ENCODE measurements at regions of chr7 and their contacts with region 1.

Region 1: DNA sequence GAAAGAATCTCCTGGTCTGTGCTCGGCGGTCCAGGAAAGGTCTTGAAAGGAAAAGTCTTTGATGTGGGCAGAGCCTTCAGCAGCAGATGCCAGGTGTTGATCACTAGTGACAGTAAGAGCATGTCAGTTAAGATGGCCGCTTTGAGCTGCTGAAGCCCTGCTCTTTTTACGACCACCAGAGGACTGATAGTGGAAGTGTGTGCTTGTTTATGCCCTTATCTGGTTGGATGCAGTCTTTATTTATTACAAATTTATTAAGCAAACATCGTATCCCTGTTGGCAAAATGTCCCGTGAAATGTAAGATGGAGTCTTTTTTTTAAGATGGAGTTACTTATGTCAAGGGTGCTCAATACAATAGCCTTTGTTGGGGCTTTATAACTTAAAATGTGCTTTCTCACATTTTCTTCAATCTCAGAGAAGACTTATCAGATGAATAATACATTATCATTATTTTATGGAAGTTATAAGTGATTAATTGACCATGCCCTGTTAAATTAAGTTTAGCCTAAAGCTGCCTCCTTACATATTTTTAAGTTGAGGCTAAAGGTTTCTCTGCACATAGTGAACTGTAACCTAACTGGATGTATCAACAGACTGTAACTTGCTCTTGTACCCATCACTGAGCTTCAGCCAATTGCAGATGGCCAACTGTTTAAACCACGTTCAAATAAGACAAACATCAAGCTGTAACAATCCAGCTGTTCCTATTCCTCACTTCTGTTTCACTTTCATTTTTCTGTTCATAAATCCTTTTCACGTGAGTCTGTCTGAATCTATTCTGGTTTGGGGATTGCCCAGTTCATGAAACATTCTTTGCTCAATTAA is 97.4 kb upstream of the PIK3CG start:
- DNase-seq: peak; percentile 18
- H3K4me3 Mint-ChIP-seq: peak overlapping the region; percentile 42
- H3K27ac Mint-ChIP-seq: peak overlapping the region; percentile 65
- H3K4me1 Mint-ChIP-seq: peaks cover 49% of the 10 kb centered on the region
- H3K27me3 Mint-ChIP-seq: no peaks in the 10 kb centered on the region

Region 2: DNA sequence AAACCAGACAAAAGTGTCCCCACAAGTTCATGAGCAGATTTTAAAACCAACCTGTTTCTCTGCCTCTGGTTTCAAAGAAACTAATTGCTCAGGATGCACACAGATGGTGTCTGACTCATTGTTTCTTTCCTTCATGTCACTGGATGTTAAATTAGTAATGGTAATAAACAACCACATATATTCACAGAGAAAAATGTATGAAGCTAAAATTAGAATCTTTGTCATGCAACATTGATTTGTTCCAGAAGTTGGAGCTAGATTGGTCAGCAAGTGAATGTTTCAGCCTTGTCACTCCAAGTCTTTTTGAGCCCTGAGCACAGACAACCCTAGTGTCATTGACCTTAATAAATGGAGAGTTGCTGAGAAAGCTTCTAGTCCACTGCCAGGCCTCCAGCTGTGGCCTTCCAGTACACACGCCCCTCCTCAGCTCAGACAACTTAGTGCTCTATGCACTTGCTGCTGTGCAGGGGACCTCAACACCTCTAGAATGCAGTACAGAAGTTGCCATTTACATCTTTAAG is 282.6 kb before region 1 on chr7:
- CTCF ChIA-PET with region 1: no interaction called
- POLR2A ChIA-PET with region 1: no interaction called
- intact Hi-C with region 1: loop called (anchors 2 kb)
- DNase-seq: peak; percentile 22
- H3K4me3 Mint-ChIP-seq: no peak overlapping the region
- H3K27ac Mint-ChIP-seq: peak overlapping the region; percentile 78
- H3K4me1 Mint-ChIP-seq: peaks cover 58% of the 10 kb centered on the region
- H3K27me3 Mint-ChIP-seq: peaks cover 18% of the 10 kb centered on the region

Region 3: DNA sequence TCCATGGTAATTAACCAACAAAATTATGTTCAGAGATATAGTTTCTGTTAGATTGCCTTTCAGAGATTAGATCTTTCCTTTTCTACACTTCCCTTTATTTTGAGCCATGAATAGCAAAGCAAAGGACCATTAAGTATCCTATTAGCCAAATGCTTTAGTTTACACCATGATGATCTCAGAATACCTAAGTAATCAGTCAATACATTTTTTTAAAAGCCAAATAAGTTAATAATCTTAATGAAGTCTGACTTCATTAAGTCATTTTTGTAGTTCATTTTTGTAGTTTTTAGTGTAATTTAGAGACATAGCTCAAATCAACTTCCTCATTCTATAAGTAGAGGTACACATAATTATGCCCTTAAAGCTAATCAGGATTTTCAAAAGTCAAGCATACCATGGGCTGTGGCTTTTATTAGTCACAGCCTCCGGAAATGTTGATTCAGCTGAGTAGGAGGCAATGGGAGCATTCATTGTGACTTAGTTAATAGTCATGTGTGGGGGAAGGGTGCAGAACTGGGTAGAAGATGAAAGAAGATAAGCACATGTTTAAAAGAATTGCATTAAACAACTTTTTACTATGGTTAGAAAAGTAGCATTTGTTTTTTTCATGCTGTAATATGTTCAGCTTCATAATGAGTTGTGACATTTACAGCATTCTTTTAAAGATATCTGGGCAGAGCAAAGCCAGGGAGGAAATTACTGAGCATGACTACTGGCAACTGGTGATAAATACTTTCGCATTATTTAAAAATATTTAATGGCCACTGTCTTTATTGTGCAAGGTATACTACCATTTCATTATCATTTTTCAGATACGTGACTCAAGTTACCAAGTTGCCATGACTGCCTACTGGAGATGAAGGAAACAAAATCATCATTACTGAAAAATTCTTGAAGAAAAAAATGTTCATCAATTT is 49.5 kb before region 1 on chr7:
- CTCF ChIA-PET with region 1: no interaction called
- POLR2A ChIA-PET with region 1: interaction called, 5 read pairs
- intact Hi-C with region 1: loop called (anchors 1 kb)
- DNase-seq: peak; percentile 90
- H3K4me3 Mint-ChIP-seq: no peak overlapping the region
- H3K27ac Mint-ChIP-seq: no peak overlapping the region
- H3K4me1 Mint-ChIP-seq: peaks cover 12% of the 10 kb centered on the region
- H3K27me3 Mint-ChIP-seq: no peaks in the 10 kb centered on the region

Region 4: GRCh38 chr7:106779877-106780276 is 12.2 kb after region 1 on chr7:
- CTCF ChIA-PET with region 1: no interaction called
- POLR2A ChIA-PET with region 1: no interaction called
- intact Hi-C with region 1: loop called (anchors 1 kb)
- DNase-seq: peak; percentile 34
- H3K4me3 Mint-ChIP-seq: no peak overlapping the region
- H3K27ac Mint-ChIP-seq: no peak overlapping the region
- H3K4me1 Mint-ChIP-seq: peaks cover 12% of the 10 kb centered on the region
- H3K27me3 Mint-ChIP-seq: no peaks in the 10 kb centered on the region

Region 5: DNA sequence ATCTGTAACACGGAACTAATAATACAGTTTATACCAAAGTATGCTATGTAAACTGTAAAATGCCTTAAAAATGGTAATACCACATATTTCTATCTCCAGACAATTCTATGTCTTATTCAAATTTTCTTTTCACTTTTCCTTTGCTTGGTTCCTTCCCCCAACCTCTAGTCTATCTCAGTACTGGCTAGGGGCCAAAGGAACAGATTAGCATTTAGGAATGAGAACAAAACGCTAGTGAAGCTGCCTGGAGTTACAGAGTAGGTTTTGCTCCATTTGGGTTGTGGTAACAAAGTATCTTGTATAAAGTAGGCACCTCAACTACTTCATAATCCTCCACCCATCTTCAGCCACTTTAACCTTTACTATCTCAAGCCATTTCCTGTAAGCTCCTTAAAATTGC is 495.1 kb after region 1 on chr7:
- CTCF ChIA-PET with region 1: no interaction called
- POLR2A ChIA-PET with region 1: no interaction called
- intact Hi-C with region 1: no loop called
- DNase-seq: no peak
- H3K4me3 Mint-ChIP-seq: no peak overlapping the region
- H3K27ac Mint-ChIP-seq: no peak overlapping the region
- H3K4me1 Mint-ChIP-seq: no peaks in the 10 kb centered on the region
- H3K27me3 Mint-ChIP-seq: no peaks in the 10 kb centered on the region